Endothelial cell of umbilical vein (primary cell): ENCODE measurements at regions of chr15 and their contacts with region 1.

Region 1: DNA sequence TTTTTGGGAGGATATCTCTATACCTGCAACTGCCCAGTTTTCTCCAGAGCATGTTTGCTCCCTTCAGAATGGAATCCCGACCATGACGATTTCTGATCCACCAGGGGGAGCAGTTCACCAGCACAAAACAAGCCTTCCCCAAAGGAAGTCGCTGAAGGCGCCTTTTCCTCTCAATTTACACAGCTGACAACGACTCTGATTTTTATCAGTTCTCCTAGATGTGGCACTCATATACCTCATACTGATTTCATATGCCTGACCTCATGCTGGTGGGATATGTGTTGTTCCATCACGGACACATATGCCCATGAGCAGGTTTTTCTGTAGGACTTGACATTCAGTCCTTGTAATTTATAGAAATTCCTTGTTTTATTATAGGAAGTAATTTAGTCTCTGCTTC is 1028.2 kb downstream of the MCTP2 start:
- DNase-seq: peak; percentile 92
- H3K4me3 ChIP-seq: no peak overlapping the region
- H3K27ac ChIP-seq: peak overlapping the region; percentile 89
- H3K4me1 ChIP-seq: peaks cover 46% of the 10 kb centered on the region
- H3K27me3 ChIP-seq: no peaks in the 10 kb centered on the region
- CTCF ChIP-seq: peak; percentile 71
- POLR2A ChIP-seq: no peak

Region 2: GRCh38 chr15:95175914-95176658 is 83.4 kb before region 1 on chr15:
- CTCF ChIA-PET with region 1: interaction called, 6 read pairs
- POLR2A ChIA-PET with region 1: no interaction called
- dilution Hi-C with region 1: no loop called
- intact Hi-C with region 1: loop called (anchors 1 kb)
- DNase-seq: peak; percentile 94
- H3K4me3 ChIP-seq: no peak overlapping the region
- H3K27ac ChIP-seq: peak overlapping the region; percentile 95
- H3K4me1 ChIP-seq: peaks cover 30% of the 10 kb centered on the region
- H3K27me3 ChIP-seq: no peaks in the 10 kb centered on the region
- CTCF ChIP-seq: no peak
- POLR2A ChIP-seq: no peak

Region 3: GRCh38 chr15:95326431-95327182 is 67.1 kb after region 1 on chr15:
- CTCF ChIA-PET with region 1: interaction called, 11 read pairs
- POLR2A ChIA-PET with region 1: no interaction called
- dilution Hi-C with region 1: no loop called
- intact Hi-C with region 1: loop called (anchors 1 kb)
- DNase-seq: peak; percentile 75
- H3K4me3 ChIP-seq: peak overlapping the region; percentile 64 to 81 (median 65)
- H3K27ac ChIP-seq: peak overlapping the region; percentile 98
- H3K4me1 ChIP-seq: peaks cover 63% of the 10 kb centered on the region
- H3K27me3 ChIP-seq: no peaks in the 10 kb centered on the region
- CTCF ChIP-seq: peak in 1 of 2 donors; percentile 0
- POLR2A ChIP-seq: no peak

Region 4: GRCh38 chr15:95394186-95395067 is 134.9 kb after region 1 on chr15:
- CTCF ChIA-PET with region 1: no interaction called
- POLR2A ChIA-PET with region 1: no interaction called
- dilution Hi-C with region 1: no loop called
- intact Hi-C with region 1: no loop called
- DNase-seq: peak; percentile 71
- H3K4me3 ChIP-seq: peak overlapping the region in 1 of 3 experiments; percentile 21
- H3K27ac ChIP-seq: peak overlapping the region; percentile 68
- H3K4me1 ChIP-seq: peaks cover 13% of the 10 kb centered on the region
- H3K27me3 ChIP-seq: no peaks in the 10 kb centered on the region
- CTCF ChIP-seq: no peak
- POLR2A ChIP-seq: no peak

Region 5: GRCh38 chr15:95734422-95735316 is 475.2 kb after region 1 on chr15:
- CTCF ChIA-PET with region 1: no interaction called
- POLR2A ChIA-PET with region 1: no interaction called
- dilution Hi-C with region 1: no loop called
- intact Hi-C with region 1: loop called (anchors 2 kb)
- DNase-seq: peak; percentile 96
- H3K4me3 ChIP-seq: no peak overlapping the region
- H3K27ac ChIP-seq: peak overlapping the region; percentile 70
- H3K4me1 ChIP-seq: peaks cover 28% of the 10 kb centered on the region
- H3K27me3 ChIP-seq: no peaks in the 10 kb centered on the region
- CTCF ChIP-seq: no peak
- POLR2A ChIP-seq: peak; percentile 50

Region 6: GRCh38 chr15:95839367-95839782 is 579.9 kb after region 1 on chr15:
- CTCF ChIA-PET with region 1: no interaction called
- POLR2A ChIA-PET with region 1: no interaction called
- dilution Hi-C with region 1: no loop called
- intact Hi-C with region 1: no loop called
- DNase-seq: peak; percentile 20
- H3K4me3 ChIP-seq: no peak overlapping the region
- H3K27ac ChIP-seq: no peak overlapping the region
- H3K4me1 ChIP-seq: no peaks in the 10 kb centered on the region
- H3K27me3 ChIP-seq: no peaks in the 10 kb centered on the region
- CTCF ChIP-seq: no peak
- POLR2A ChIP-seq: no peak

Region 7: GRCh38 chr15:96273317-96274086 is 1014.0 kb after region 1 on chr15:
- CTCF ChIA-PET with region 1: no interaction called
- POLR2A ChIA-PET with region 1: no interaction called
- dilution Hi-C with region 1: no loop called
- intact Hi-C with region 1: loop called (anchors 1 kb)
- DNase-seq: peak; percentile 94
- H3K4me3 ChIP-seq: no peak overlapping the region
- H3K27ac ChIP-seq: peak overlapping the region; percentile 90
- H3K4me1 ChIP-seq: peaks cover 41% of the 10 kb centered on the region
- H3K27me3 ChIP-seq: no peaks in the 10 kb centered on the region
- CTCF ChIP-seq: no peak
- POLR2A ChIP-seq: peak; percentile 84

Region 8: DNA sequence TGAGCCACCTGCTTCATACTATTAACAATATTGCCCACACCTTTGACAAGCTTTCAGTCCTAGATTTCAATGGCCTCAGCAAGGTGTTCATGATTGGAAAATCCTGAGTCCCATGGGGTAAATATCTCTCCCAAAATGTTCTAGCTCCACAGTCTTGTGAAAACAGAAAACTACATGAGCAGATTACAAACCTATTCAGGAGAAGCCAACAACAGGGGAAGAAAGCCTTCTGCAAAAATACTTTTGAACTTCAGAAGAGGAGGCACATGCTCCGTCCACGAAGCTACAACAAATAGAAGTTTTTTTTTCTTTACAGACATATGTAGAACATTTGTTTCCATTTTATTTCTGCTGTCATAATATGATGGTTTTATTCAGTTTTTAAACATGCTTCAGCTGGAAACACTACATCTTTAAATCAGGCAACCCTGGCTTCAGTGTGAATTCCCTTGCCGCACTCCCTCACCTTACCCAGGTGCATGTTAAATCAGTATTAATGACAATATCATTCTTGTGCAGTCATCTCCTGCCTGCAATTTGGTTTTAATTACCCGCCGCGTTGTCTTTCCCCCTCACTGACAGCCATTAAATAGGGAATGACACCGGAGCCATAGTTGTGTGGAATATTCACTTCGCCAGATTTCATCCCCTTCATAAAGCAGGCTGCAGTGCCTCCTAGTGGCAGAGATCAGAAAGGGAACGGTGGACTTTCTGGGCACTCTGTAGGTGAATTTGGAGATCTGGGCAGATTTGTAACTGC is 1975.5 kb after region 1 on chr15:
- CTCF ChIA-PET with region 1: interaction called, 11 read pairs
- POLR2A ChIA-PET with region 1: no interaction called
- dilution Hi-C with region 1: no loop called
- intact Hi-C with region 1: loop called (anchors 5 kb)
- DNase-seq: peak; percentile 71
- H3K4me3 ChIP-seq: no peak overlapping the region
- H3K27ac ChIP-seq: no peak overlapping the region
- H3K4me1 ChIP-seq: no peaks in the 10 kb centered on the region
- H3K27me3 ChIP-seq: peaks cover 0 to 2% of the 10 kb centered on the region in 2 experiments
- CTCF ChIP-seq: peak; percentile 75 to 90
- POLR2A ChIP-seq: no peak